IMR-90 (cell line): ENCODE measurements at regions of chr7 and their contacts with region 1.

Region 1: GRCh38 chr7:15720849-15721471 is 34.5 kb upstream of the MEOX2 start:
- DNase-seq: peak; percentile 53
- ATAC-seq: no peak
- H3K4me3 ChIP-seq: no peak overlapping the region
- H3K27ac ChIP-seq: no peak overlapping the region
- H3K4me1 ChIP-seq: no peaks in the 10 kb centered on the region
- H3K27me3 ChIP-seq: no peaks in the 10 kb centered on the region
- CTCF ChIP-seq: peak; percentile 70
- POLR2A ChIP-seq: no peak
- RAD21 ChIP-seq: peak; percentile 63

Region 2: DNA sequence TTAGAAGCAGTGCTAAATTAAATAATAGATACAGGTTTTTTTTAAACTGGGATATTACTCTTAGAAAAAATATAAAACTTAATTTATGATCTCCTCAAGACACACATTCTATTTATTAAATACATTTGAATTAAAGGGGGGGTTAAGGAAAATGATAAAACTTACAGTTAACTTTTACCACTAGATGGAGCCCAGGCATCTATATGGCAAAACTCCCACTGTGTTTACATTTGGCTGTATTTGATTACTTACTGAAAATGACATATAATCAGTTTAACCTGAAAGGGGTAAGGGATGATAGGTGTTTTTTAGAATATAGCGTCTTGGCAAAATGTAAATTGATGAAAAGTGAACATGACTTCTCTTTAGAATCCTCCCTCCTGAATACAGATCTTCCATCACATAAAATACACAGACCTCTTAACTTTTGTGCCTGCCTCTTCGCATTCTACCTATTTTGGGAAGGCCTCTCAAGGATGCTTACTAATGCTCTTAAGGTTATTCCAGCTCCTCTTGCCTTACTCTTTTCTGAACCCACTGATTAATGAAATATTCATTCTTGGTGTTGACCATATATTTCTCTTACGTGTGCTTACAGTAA is 394.8 kb before region 1 on chr7:
- CTCF ChIA-PET with region 1: interaction called, 7 read pairs
- POLR2A ChIA-PET with region 1: no interaction called
- dilution Hi-C with region 1: no loop called
- in situ Hi-C with region 1: loop called (anchors 10 kb)
- intact Hi-C with region 1: loop called (anchors 1 kb)
- DNase-seq: peak; percentile 35
- ATAC-seq: 0 out of 2 replicates have a peak, but pooled peaks have one; percentile 48
- H3K4me3 ChIP-seq: no peak overlapping the region
- H3K27ac ChIP-seq: no peak overlapping the region
- H3K4me1 ChIP-seq: no peaks in the 10 kb centered on the region
- H3K27me3 ChIP-seq: no peaks in the 10 kb centered on the region; the same call in 1 of the 2 replicates
- CTCF ChIP-seq: peak; percentile 73
- POLR2A ChIP-seq: no peak
- RAD21 ChIP-seq: peak; percentile 71

Region 3: DNA sequence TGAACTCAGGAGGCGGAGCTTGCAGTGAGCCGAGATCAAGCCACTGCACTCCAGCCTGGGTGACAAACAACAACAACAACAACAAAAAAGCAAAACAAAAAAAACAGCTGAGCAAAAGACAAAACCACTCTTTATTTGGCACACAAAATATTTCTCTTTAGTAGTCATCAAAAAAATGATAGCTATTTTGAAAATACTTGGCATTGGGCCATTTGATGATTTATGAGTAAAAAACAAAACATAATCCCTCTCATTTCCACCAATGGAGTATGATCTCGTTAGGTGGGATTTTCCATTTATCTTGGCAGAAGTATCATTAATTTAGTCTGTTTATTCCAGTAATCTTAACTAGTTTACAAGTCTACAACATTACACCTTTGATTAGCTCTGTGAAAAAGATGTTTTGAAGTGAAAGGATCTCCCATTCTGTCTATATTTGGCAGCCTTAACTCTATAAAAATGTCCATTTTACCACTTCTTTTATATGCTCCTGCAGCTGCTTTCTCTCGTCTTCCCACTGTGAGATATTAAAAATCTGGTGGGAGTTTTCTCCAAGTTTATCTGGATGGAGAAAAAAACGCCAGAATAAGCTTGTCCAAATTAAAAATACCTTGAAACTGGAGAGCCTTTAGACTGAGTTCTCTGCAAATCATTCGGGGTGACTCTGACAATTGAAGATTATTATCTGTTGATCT is 100.3 kb before region 1 on chr7:
- CTCF ChIA-PET with region 1: no interaction called
- POLR2A ChIA-PET with region 1: no interaction called
- dilution Hi-C with region 1: no loop called
- in situ Hi-C with region 1: no loop called
- intact Hi-C with region 1: loop called (anchors 5 kb)
- DNase-seq: no peak
- ATAC-seq: no peak
- H3K4me3 ChIP-seq: no peak overlapping the region
- H3K27ac ChIP-seq: no peak overlapping the region
- H3K4me1 ChIP-seq: no peaks in the 10 kb centered on the region
- H3K27me3 ChIP-seq: no peaks in the 10 kb centered on the region
- CTCF ChIP-seq: no peak
- POLR2A ChIP-seq: no peak
- RAD21 ChIP-seq: no peak

Region 4: DNA sequence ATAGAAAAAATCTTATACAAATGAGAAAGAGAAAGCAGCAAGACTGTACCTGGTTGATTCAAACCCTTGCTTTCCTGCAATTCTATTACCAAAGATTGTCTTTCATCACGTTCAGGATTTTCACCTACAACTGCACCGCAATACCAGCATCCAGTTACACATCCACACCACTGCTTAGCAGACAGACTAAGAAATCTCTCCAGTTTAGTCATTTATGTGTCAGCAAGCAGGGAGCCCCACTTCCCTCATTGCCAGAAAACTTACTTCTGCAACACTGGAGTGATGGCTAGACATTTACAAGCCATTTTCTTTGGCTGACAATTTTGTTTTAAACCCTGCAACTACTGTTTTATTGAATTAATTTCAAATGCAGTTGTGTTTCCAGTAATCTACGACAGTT is 325.1 kb after region 1 on chr7:
- CTCF ChIA-PET with region 1: no interaction called
- POLR2A ChIA-PET with region 1: no interaction called
- dilution Hi-C with region 1: no loop called
- in situ Hi-C with region 1: no loop called
- intact Hi-C with region 1: no loop called
- DNase-seq: peak; percentile 61
- ATAC-seq: peak; percentile 54
- H3K4me3 ChIP-seq: no peak overlapping the region
- H3K27ac ChIP-seq: no peak overlapping the region
- H3K4me1 ChIP-seq: no peaks in the 10 kb centered on the region
- H3K27me3 ChIP-seq: no peaks in the 10 kb centered on the region
- CTCF ChIP-seq: no peak
- POLR2A ChIP-seq: no peak
- RAD21 ChIP-seq: no peak